ENCODE measurements at regions of chr3 and their contacts with region 1.

Region 1: GRCh38 chr3:58433400-58434169 is at the start of gene PDHB:
- DNase-seq: peak; percentile 86
- ATAC-seq: peak; percentile 95
- H3K4me3 Mint-ChIP-seq: peak within 1 kb of the TSS; percentile 95
- H3K27ac Mint-ChIP-seq: peak within 1 kb of the TSS; percentile 95
- H3K4me1 Mint-ChIP-seq: peaks cover 27% of the 10 kb centered on the region
- H3K27me3 Mint-ChIP-seq: no peaks in the 10 kb centered on the region
- CTCF ChIP-seq: no peak
- total RNA-seq, gene PDHB: 63.0 and 67.3 TPM in 2 replicates

Region 2: DNA sequence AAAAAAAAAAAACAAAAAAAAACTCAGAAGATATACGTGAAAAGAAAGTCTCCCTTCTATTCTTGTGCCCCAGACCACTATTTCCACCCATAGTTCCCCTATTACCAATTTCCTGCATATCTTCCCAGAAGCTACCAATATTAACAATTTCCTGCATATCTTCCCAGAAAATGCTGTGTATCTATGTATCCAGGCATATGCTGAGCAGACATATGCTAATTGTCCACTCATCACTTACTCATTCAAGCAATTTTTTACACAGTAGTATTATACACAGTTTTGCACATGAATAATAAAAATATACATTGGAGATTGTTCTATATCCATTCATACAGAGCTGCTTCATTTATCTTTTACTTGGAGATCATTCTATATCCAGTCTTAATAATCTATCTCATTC is 690.1 kb before region 1 on chr3:
- CTCF ChIA-PET with region 1: no interaction called
- POLR2A ChIA-PET with region 1: no interaction called
- intact Hi-C with region 1: no loop called
- DNase-seq: no peak
- ATAC-seq: no peak
- H3K4me3 Mint-ChIP-seq: no peak overlapping the region
- H3K27ac Mint-ChIP-seq: no peak overlapping the region
- H3K4me1 Mint-ChIP-seq: no peaks in the 10 kb centered on the region
- H3K27me3 Mint-ChIP-seq: no peaks in the 10 kb centered on the region
- CTCF ChIP-seq: no peak

Region 3: GRCh38 chr3:57755668-57756527 is 677.7 kb before region 1 on chr3 and contains the start of gene SLMAP:
- CTCF ChIA-PET with region 1: no interaction called
- POLR2A ChIA-PET with region 1: no interaction called
- intact Hi-C with region 1: loop called (anchors 10 kb)
- DNase-seq: peak; percentile 87
- ATAC-seq: peak; percentile 94
- H3K4me3 Mint-ChIP-seq: peak within 1 kb of the TSS; percentile 95
- H3K27ac Mint-ChIP-seq: peak within 1 kb of the TSS; percentile 94
- H3K4me1 Mint-ChIP-seq: peaks cover 39% of the 10 kb centered on the region
- H3K27me3 Mint-ChIP-seq: no peaks in the 10 kb centered on the region
- CTCF ChIP-seq: no peak
- total RNA-seq, gene SLMAP: 45.4 and 57.1 TPM in 2 replicates

Region 4: DNA sequence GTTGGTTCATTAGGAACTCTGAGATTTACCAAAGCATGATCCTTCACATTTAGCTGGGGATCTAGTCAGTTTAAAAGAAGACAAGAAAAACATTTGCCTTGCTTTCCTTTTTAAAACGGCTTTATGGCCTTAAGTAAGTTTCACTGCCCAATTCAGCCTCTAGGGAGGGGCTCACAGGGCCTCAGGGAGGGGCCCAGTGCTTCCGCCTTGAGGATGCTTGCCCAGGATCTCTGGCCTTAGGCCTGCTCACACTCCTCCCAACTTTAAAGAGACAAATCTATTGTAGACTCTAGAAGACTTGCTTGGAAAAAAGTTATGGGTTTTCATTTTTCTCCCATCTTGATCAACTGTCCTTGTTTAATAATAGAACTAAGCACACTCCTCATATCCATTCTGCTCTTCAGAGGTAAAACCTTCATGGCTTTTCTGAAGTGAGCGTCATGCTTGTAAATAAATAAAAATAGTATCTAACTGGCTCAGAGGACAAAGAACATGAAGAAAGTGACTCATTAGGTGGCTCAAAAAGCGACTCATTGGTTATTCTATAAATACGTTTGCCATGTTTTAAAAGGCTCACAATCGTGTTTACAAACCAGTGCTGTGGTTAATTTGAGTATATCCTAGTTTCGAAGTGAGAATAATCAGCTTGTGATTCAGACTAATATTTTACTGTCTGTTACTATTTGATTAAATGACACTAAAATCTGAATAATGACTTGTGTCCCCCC is 13.6 kb before region 1 on chr3:
- CTCF ChIA-PET with region 1: interaction called, 6 read pairs
- POLR2A ChIA-PET with region 1: interaction called, 3 read pairs
- intact Hi-C with region 1: loop called (anchors 2 kb)
- DNase-seq: no peak
- ATAC-seq: peak; percentile 56
- H3K4me3 Mint-ChIP-seq: peak overlapping the region; percentile 32
- H3K27ac Mint-ChIP-seq: peak overlapping the region; percentile 88
- H3K4me1 Mint-ChIP-seq: peaks cover 38% of the 10 kb centered on the region
- H3K27me3 Mint-ChIP-seq: no peaks in the 10 kb centered on the region
- CTCF ChIP-seq: no peak